CD4-positive, alpha-beta memory T cell (primary cell): ENCODE measurements at regions of chr19 and their contacts with region 1.

Region 1: DNA sequence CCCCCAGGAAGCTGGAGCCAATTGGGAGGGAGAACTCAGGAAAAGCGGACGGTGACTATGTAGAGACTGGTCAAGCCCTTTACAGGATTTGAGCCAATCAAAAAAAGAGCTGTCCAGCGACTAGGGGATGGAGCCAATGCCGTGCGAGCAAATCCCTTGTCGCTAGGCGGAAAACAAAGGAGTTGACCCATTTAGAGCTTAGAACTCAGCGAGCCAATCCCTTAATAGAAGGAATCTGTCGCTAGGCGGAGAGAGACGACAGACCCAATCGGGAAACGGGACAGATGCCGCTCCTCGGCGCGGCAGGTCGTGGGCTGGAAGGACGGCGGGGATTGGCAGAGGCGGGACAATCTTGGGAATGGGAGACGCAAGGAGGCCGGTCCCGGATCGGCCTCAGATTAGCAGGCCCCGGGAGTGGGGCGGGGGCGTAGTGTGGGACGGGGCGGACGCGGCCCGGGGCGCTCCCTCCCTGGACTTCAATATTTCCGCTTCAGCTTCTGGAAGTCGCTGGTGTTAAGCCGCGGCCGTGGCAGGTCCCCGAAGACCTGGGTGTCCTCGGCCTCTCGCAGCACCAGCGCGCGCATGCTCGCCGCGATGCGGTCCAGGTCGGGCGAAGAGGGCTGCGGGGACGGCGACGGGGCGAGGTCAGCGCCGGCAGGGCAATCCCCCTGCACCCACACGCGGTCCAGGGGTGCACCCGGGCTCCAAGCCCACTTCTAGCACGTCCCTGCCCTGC is 2.2 kb upstream of the PNKP start:
- DNase-seq: peak; percentile 92 to 94 (median 92)
- H3K4me3 ChIP-seq: peak overlapping the region; percentile 47 to 70
- H3K4me3 Mint-ChIP-seq: peak overlapping the region in 3 of 8 donors; percentile 78 to 87 (median 81)
- H3K27ac ChIP-seq: peak overlapping the region; percentile 66
- H3K27ac Mint-ChIP-seq: peak overlapping the region in 5 of 7 donors; percentile 88 to 94 (median 92)
- H3K4me1 ChIP-seq: peaks cover 53% of the 10 kb centered on the region
- H3K4me1 Mint-ChIP-seq: peaks cover 17 to 43% (median 22%) of the 10 kb centered on the region in 4 donors
- H3K27me3 ChIP-seq: no peaks in the 10 kb centered on the region
- H3K27me3 Mint-ChIP-seq: no peaks in the 10 kb centered on the region

Region 2: DNA sequence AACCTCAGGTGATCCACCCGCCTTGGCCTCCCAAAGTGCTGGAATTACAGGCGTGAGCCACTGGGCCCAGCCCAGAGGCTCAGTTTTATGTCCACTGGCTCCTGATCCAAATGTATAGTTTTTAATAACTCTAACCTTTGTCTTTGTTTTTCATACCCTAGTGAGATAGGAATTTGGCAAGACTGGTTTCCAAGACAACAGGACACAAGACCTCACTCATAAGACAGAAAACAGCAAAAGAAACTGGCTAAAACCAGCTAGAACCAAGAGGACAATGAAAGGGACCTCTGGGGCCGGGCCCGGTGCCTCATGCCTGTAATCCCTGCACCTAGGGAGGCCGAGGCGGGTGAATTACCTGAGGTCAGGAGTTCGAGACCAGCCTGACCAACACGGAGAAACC is 151.1 kb before region 1 on chr19:
- CTCF ChIA-PET with region 1: interaction called, 10 read pairs
- POLR2A ChIA-PET with region 1: interaction called, 6 read pairs
- intact Hi-C with region 1: no loop called
- DNase-seq: no peak
- H3K4me3 ChIP-seq: no peak overlapping the region
- H3K4me3 Mint-ChIP-seq: peak overlapping the region in 6 of 8 donors; percentile 15 to 96 (median 49)
- H3K27ac ChIP-seq: no peak overlapping the region
- H3K27ac Mint-ChIP-seq: peak overlapping the region in 5 of 7 donors; percentile 25 to 98 (median 79)
- H3K4me1 ChIP-seq: peaks cover 12% of the 10 kb centered on the region
- H3K4me1 Mint-ChIP-seq: peaks cover 7 to 12% (median 10%) of the 10 kb centered on the region in 4 donors
- H3K27me3 ChIP-seq: no peaks in the 10 kb centered on the region
- H3K27me3 Mint-ChIP-seq: no peaks in the 10 kb centered on the region

Region 3: DNA sequence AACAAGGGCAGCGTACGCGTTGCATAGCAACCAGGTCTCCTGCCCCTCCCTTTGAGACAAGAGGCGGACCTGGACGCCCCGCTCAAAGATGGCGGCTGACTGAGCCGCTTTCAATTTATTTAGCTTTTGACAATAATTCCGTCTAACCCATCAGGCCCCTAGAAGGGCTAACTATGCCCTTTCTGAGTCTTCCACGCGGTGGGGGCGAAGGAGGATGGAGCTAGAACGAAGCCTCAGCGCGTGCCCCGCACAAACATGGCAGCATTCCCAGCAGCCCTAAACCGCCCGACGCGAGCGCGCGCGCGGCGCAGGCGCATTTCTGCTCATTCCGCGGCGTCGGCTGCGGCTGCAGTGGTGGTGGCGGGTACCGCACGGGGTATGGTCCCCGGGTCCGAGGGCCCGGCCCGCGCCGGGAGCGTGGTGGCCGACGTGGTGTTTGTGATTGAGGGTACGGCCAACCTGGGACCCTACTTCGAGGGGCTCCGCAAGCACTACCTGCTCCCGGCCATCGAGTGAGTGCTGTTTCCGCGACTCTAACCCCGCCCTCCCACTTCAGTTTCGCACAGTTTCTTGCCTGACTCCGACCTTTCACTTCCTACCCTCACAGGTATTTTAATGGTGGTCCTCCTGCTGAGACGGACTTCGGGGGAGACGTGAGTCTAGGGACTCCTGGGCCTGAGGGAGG is 51.5 kb before region 1 on chr19 and contains the start of gene MED25:
- CTCF ChIA-PET with region 1: interaction called, 3 read pairs
- POLR2A ChIA-PET with region 1: interaction called, 37 read pairs
- intact Hi-C with region 1: loop called (anchors 1 kb)
- DNase-seq: peak; percentile 90 to 96 (median 95)
- H3K4me3 ChIP-seq: peak within 1 kb of the TSS; percentile 64 to 88
- H3K4me3 Mint-ChIP-seq: peak within 1 kb of the TSS; percentile 89 to 99 (median 99)
- H3K27ac ChIP-seq: peak within 1 kb of the TSS; percentile 95
- H3K27ac Mint-ChIP-seq: peak within 1 kb of the TSS; percentile 98 to 100 (median 100)
- H3K4me1 ChIP-seq: peaks cover 33% of the 10 kb centered on the region
- H3K4me1 Mint-ChIP-seq: peaks cover 17 to 54% (median 36%) of the 10 kb centered on the region in 4 donors
- H3K27me3 ChIP-seq: no peaks in the 10 kb centered on the region
- H3K27me3 Mint-ChIP-seq: no peaks in the 10 kb centered on the region
- total RNA-seq, gene MED25: 41.8 to 48.8 TPM

Region 4: GRCh38 chr19:49896863-49897621 is 27.4 kb after region 1 on chr19 and contains the start of gene IL4I1:
- CTCF ChIA-PET with region 1: no interaction called
- POLR2A ChIA-PET with region 1: interaction called, 11 read pairs
- intact Hi-C with region 1: no loop called
- DNase-seq: peak; percentile 76 to 94 (median 87)
- H3K4me3 ChIP-seq: peak within 1 kb of the TSS; percentile 1 to 44
- H3K4me3 Mint-ChIP-seq: peak within 1 kb of the TSS; percentile 85 to 92 (median 90)
- H3K27ac ChIP-seq: peak within 1 kb of the TSS; percentile 98
- H3K27ac Mint-ChIP-seq: peak within 1 kb of the TSS; percentile 97 to 100 (median 99)
- H3K4me1 ChIP-seq: peaks cover 44% of the 10 kb centered on the region
- H3K4me1 Mint-ChIP-seq: peaks cover 23 to 54% (median 40%) of the 10 kb centered on the region in 4 donors
- H3K27me3 ChIP-seq: no peaks in the 10 kb centered on the region
- H3K27me3 Mint-ChIP-seq: no peaks in the 10 kb centered on the region
- total RNA-seq, gene IL4I1: 2.6 to 3.4 TPM